Psoas muscle (tissue), 8 donors: ENCODE measurements at regions of chr1 and their contacts with region 1.

Region 1: DNA sequence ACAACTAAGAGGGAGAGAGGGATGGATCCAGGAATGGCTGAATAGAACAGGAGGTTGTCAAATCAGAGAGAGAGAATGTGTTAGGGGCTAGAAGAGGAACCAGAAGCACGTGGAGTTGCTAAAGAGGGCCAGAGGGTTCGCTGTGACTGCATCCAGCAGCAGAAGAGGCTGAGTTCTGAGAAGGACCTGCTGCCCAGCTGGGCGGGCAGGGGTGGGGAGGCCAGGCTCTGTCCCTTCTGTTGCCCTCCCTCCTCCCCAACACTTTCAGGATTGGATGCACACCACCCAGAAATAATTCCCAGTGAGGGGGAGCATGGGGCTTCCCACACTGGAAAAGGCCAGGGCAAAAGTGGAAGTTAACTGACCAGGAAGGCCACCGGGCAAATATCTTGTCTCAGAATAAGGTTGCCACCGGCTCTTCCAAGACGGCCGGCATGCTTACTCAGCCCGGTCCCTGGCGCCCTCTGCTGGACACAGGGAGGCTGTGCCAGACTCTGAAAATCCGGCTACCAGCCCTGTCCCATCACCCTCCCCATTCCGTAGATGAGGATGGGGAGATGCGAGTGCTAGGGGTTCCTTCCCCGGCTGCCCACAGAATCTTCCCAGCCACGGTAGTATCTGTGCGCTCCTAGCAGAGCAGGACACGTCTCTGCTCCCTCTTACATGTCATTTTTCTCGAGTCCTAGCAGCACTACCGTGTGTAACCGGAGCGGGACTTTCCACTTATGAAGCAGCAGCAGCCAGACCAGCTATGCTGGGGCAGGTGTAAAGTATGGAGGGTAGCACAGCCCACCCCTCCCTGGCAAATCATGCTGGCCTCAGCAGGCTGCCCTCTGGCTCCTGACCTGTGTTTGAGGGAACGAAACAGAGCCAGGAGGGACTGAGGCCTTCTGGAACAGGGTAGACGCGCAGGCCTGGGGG is 46.8 kb upstream of the A3GALT2 start:
- DNase-seq: peak; percentile 86 to 95
- ATAC-seq: peak; percentile 72 to 80 (median 76)
- H3K4me3 ChIP-seq: no peak overlapping the region
- H3K27ac ChIP-seq: peak overlapping the region; percentile 88
- H3K4me1 ChIP-seq: peaks cover 44% of the 10 kb centered on the region
- H3K27me3 ChIP-seq: no peaks in the 10 kb centered on the region
- CTCF ChIP-seq: peak; percentile 98

Region 2: GRCh38 chr1:33127001-33127791 is 240.5 kb before region 1 on chr1:
- intact Hi-C with region 1: loop called (anchors 5 to 10 kb)
- DNase-seq: peak; percentile 99
- ATAC-seq: peak; percentile 92 to 98 (median 94)
- H3K4me3 ChIP-seq: peak overlapping the region; percentile 88
- H3K27ac ChIP-seq: peak overlapping the region; percentile 91
- H3K4me1 ChIP-seq: peaks cover 36% of the 10 kb centered on the region
- H3K27me3 ChIP-seq: peaks cover 0 to 3% (median 0%) of the 10 kb centered on the region in 3 donors
- CTCF ChIP-seq: peak; percentile 89

Region 3: DNA sequence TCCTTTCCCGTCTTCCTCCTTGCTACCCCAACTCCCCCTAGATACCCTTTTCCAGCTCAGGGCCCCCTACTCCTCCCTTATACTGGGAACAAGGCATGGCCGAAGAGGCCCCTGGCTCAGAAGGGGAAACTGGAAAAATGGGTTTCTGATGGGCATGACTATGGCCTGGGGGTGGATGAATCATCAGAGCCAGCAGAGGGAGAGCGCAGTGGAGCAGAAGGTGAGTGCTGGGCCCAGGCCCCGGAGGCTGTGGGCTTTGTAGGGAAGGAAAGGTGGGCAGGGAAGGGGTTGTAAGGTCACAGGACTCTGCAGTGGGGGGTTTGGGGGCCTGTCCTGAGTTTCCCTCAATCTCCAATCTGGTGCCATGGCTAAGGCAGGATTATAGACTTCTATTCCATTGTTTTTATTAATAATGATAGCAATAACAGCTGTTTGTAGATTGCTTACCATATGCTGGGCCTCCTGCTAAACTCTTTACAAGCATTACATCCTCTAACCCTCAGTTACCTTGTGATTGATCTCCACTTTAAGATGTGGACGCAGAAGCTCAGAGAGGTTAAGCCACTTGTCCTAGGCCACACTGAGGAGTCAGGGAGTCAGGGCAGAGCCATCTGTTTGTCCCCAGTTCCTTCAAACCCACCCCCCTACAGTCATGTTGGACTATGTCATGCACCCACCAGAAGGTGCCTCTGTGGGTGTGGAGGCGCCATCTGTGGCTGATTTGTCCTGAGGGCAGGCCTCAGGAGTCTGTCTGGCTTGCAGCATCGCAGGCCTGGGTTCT is 147.7 kb before region 1 on chr1:
- intact Hi-C with region 1: loop called in 1 of 2 experiments (anchors 5 kb)
- DNase-seq: no peak
- ATAC-seq: no peak
- H3K4me3 ChIP-seq: no peak overlapping the region
- H3K27ac ChIP-seq: no peak overlapping the region
- H3K4me1 ChIP-seq: no peaks in the 10 kb centered on the region
- H3K27me3 ChIP-seq: no peaks in the 10 kb centered on the region
- CTCF ChIP-seq: no peak

Region 4: GRCh38 chr1:33244143-33244820 is 123.5 kb before region 1 on chr1:
- intact Hi-C with region 1: no loop called
- DNase-seq: no peak
- ATAC-seq: no peak
- H3K4me3 ChIP-seq: no peak overlapping the region
- H3K27ac ChIP-seq: no peak overlapping the region
- H3K4me1 ChIP-seq: no peaks in the 10 kb centered on the region
- H3K27me3 ChIP-seq: no peaks in the 10 kb centered on the region
- CTCF ChIP-seq: no peak

Region 5: GRCh38 chr1:33300673-33301072 is 67.1 kb before region 1 on chr1:
- intact Hi-C with region 1: loop called (anchors 1 to 2 kb)
- DNase-seq: peak; percentile 59 to 74
- ATAC-seq: peak in 3 of 4 donors; percentile 22 to 54 (median 43)
- H3K4me3 ChIP-seq: no peak overlapping the region
- H3K27ac ChIP-seq: peak overlapping the region; percentile 18
- H3K4me1 ChIP-seq: no peaks in the 10 kb centered on the region
- H3K27me3 ChIP-seq: no peaks in the 10 kb centered on the region
- CTCF ChIP-seq: no peak

Region 6: DNA sequence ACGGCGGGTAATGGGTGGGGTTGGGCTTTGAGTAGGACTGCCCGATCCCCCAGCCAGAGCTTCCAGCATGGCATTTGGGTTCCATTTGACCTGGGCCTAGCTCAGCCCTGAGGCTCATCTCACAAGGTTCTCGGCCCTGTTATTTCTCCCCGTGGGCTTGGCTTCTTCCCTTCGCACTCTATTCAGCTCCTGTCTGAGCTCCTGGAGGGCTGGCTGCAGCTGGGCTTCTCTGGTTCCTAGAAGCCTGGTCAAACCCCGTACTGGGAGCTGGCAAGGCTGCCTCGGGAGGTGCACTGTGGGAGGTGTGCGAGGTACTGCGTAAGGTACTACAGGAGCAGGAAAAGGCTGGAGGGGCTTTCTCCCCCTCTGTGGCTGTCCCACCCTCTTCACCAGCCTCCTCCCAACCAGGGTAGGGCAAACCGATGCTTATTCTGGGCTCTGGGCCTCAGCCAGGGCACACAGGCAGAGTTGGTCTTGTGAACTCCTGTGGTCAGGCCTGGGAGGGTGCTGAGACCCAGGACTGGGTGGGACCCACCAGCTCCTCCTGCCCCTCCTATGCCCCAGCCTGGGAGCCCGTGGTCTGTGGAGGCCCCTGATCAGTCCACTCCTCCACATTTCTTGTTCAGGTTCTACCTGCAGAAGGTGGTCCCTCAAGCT is 47.7 kb before region 1 on chr1:
- intact Hi-C with region 1: no loop called
- DNase-seq: no peak
- ATAC-seq: peak; percentile 17 to 41 (median 31)
- H3K4me3 ChIP-seq: no peak overlapping the region
- H3K27ac ChIP-seq: no peak overlapping the region
- H3K4me1 ChIP-seq: no peaks in the 10 kb centered on the region
- H3K27me3 ChIP-seq: no peaks in the 10 kb centered on the region
- CTCF ChIP-seq: no peak

Region 7: GRCh38 chr1:33334081-33334552 is 33.6 kb before region 1 on chr1:
- intact Hi-C with region 1: loop called in 1 of 2 experiments (anchors 5 kb)
- DNase-seq: peak; percentile 83 to 86
- ATAC-seq: peak; percentile 13 to 54 (median 52)
- H3K4me3 ChIP-seq: peak overlapping the region; percentile 49
- H3K27ac ChIP-seq: peak overlapping the region; percentile 98
- H3K4me1 ChIP-seq: peaks cover 87% of the 10 kb centered on the region
- H3K27me3 ChIP-seq: no peaks in the 10 kb centered on the region
- CTCF ChIP-seq: no peak

Region 8: DNA sequence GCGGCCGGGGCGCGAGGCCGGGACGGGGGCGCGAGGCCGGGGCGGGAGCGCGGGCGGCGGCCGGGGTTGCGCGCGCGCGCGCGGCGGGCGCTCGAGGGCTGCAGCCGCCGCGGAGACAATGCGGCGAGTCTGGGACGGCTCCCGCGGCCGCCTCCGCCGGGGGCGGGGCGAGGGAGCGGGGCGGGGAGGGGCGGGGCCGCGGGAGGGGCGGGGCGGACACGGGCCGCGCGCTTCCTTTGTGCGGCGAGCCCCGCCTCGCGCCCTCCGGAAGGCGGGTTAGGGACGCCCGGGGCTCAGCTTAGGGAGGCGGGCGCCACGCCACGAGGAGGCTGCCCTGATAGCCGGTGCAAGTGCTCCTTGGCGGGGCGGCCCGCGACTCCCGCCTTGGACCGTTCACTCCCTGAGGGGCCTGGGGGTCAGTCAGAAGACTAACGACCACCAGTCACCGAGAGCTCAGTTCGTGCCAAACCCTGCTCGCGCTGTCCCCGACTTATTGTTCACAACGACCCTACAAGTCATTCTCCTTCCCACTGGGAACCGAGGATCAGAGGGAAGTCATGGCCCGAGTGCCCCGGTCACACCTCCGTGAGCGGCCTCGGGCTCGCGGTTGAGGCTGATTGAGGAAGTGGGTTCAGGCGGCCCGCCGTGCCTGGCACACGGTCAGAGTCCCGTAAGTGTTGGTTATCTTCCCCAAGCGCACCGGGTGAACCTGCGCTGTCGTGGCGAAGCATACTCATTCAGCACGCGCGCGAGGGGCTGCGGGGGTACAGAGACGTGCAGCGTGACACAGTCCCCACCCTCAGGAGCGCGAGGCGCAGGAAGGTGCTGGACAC is 17.8 kb before region 1 on chr1:
- intact Hi-C with region 1: loop called in 1 of 2 experiments (anchors 1 kb)
- DNase-seq: peak; percentile 92 to 95
- ATAC-seq: peak; percentile 72 to 81 (median 79)
- H3K4me3 ChIP-seq: peak overlapping the region; percentile 85
- H3K27ac ChIP-seq: peak overlapping the region; percentile 98
- H3K4me1 ChIP-seq: peaks cover 35% of the 10 kb centered on the region
- H3K27me3 ChIP-seq: no peaks in the 10 kb centered on the region
- CTCF ChIP-seq: no peak

Region 9: GRCh38 chr1:33466159-33466558 is 98.4 kb after region 1 on chr1:
- intact Hi-C with region 1: loop called (anchors 5 kb)
- DNase-seq: no peak
- ATAC-seq: peak in 3 of 4 donors; percentile 52 to 76 (median 63)
- H3K4me3 ChIP-seq: no peak overlapping the region
- H3K27ac ChIP-seq: no peak overlapping the region
- H3K4me1 ChIP-seq: peaks cover 21% of the 10 kb centered on the region
- H3K27me3 ChIP-seq: no peaks in the 10 kb centered on the region
- CTCF ChIP-seq: no peak